ENCODE measurements at regions of chr4 and their contacts with region 1.

Region 1: GRCh38 chr4:54322818-54323417 is 93.8 kb downstream of the PDGFRA start:
- DNase-seq: peak; percentile 14 to 54 (median 39)
- H3K4me3 ChIP-seq: no peak overlapping the region
- H3K4me3 Mint-ChIP-seq: no peak overlapping the region
- H3K27ac ChIP-seq: no peak overlapping the region
- H3K27ac Mint-ChIP-seq: no peak overlapping the region
- H3K4me1 ChIP-seq: peaks cover 0 to 3% of the 10 kb centered on the region in 2 donors
- H3K4me1 Mint-ChIP-seq: peaks cover 8% of the 10 kb centered on the region
- H3K27me3 ChIP-seq: no peaks in the 10 kb centered on the region
- H3K27me3 Mint-ChIP-seq: peaks cover 0 to 2% (median under 1%) of the 10 kb centered on the region in 3 donors
- CTCF ChIP-seq: peak; percentile 75

Region 2: DNA sequence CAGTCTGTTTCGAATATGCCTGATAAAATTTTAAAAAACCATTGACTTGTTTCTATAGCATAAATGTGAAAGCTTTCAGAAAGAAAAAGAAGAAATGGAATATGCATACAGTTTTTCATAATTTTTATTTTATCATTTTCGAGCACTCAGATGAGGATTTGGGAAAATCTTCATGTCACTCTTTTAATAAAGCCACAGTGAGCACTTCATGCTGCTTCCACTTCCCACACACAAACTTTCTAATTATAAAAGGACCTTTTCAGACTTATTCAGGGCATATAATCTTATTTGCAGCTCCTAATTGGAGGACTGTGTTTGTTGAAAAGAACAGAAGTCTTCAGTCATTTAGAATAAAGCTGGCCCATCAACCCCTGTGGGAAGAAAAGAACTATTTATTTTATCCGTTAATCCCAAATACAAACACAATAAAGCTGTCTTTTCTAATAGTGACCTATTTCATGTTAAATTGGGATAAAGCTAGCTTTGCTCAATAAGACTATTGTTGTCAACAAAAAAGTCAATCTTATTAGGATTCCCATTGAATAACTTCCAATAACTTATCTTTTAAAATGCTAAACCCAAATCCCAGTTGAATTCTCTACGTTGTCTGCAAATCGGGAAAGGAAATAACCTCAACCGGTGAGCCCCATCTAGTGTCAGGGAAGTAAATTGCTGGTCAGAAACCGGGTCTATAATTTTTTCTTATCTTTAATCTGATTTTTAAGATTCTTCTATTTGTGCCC is 117.6 kb after region 1 on chr4:
- intact Hi-C with region 1: loop called (anchors 10 kb)
- DNase-seq: peak in 1 of 3 donors; percentile 30
- H3K4me3 ChIP-seq: no peak overlapping the region
- H3K4me3 Mint-ChIP-seq: no peak overlapping the region
- H3K27ac ChIP-seq: peak overlapping the region in 1 of 2 donors; percentile 6
- H3K27ac Mint-ChIP-seq: peak overlapping the region in 2 of 7 donors; percentile 11 to 39
- H3K4me1 ChIP-seq: peaks cover 7 to 14% of the 10 kb centered on the region in 2 donors
- H3K4me1 Mint-ChIP-seq: peaks cover 11% of the 10 kb centered on the region
- H3K27me3 ChIP-seq: peaks cover 0 to 7% of the 10 kb centered on the region in 2 donors
- H3K27me3 Mint-ChIP-seq: peaks cover 0 to 5% (median 2%) of the 10 kb centered on the region in 3 donors
- CTCF ChIP-seq: peak; percentile 68

Region 3: GRCh38 chr4:55321707-55322264 is 998.9 kb after region 1 on chr4:
- intact Hi-C with region 1: loop called in 1 of 2 experiments (anchors 5 kb)
- DNase-seq: peak; percentile 47 to 67 (median 65)
- H3K4me3 ChIP-seq: no peak overlapping the region
- H3K4me3 Mint-ChIP-seq: no peak overlapping the region
- H3K27ac ChIP-seq: no peak overlapping the region
- H3K27ac Mint-ChIP-seq: no peak overlapping the region
- H3K4me1 ChIP-seq: no peaks in the 10 kb centered on the region
- H3K4me1 Mint-ChIP-seq: peaks cover 4% of the 10 kb centered on the region
- H3K27me3 ChIP-seq: peaks cover 2 to 3% of the 10 kb centered on the region in 2 donors
- H3K27me3 Mint-ChIP-seq: peaks cover 2 to 9% (median 3%) of the 10 kb centered on the region in 3 donors
- CTCF ChIP-seq: peak; percentile 81